Caco-2 (cell line): ENCODE measurements at regions of chr12 and their contacts with region 1.

Region 1: DNA sequence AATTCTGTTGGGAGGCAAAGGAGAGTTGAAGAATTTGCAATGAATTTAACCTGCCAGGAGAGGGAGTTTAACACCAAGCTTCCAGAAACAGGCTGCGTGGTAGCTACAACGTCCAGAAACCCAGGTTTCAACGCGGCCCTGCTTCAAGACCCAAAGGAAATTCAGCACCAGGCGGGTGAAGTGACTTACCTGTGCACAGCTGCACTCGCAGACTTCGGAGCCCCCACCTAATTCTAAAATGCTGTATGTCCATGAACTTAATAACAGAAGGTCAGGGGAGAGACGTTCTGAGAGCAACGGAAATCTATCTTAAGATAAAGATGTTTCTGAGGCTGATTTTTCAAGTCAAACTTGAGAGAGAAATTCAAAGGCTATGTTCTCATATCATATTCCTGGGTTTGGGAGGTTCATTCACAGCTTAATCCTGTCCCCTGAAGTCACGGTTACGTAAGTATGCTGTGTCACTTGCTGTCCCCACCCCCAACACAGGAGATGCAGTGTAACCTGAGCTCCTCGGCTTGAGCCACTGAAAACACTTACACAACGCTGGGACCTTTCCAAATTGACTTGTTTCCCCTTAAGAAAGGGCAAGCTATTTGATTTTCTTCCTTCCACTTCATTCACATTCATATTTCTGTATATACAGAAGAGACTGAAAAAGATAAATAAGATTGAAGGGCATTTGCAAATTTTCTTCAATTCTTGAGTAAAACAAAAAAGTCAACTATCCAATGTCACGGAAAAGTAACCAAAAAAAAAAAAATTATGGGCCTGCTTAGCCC is 22.7 kb downstream of the CLIP1 start:
- DNase-seq: peak; percentile 81 to 89
- H3K4me3 ChIP-seq: 0 out of 2 replicates have a peak overlapping the region, but pooled peaks have one; percentile 12
- H3K4me3 Mint-ChIP-seq: peak overlapping the region; percentile 75
- H3K27ac Mint-ChIP-seq: peak overlapping the region; percentile 99
- H3K4me1 ChIP-seq: peaks cover 35% of the 10 kb centered on the region
- H3K4me1 Mint-ChIP-seq: peaks cover 26% of the 10 kb centered on the region
- H3K27me3 ChIP-seq: no peaks in the 10 kb centered on the region
- H3K27me3 Mint-ChIP-seq: no peaks in the 10 kb centered on the region
- CTCF ChIP-seq: peak; percentile 62 to 77

Region 2: GRCh38 chr12:122366685-122367475 is 32.9 kb before region 1 on chr12:
- CTCF ChIA-PET with region 1: interaction called, 7 read pairs
- POLR2A ChIA-PET with region 1: interaction called, 5 read pairs
- intact Hi-C with region 1: loop called (anchors 2 kb)
- DNase-seq: peak; percentile 64 to 68
- H3K4me3 ChIP-seq: no peak overlapping the region
- H3K4me3 Mint-ChIP-seq: peak overlapping the region; percentile 37
- H3K27ac Mint-ChIP-seq: peak overlapping the region; percentile 98
- H3K4me1 ChIP-seq: peaks cover 30% of the 10 kb centered on the region
- H3K4me1 Mint-ChIP-seq: peaks cover 16% of the 10 kb centered on the region
- H3K27me3 ChIP-seq: no peaks in the 10 kb centered on the region
- H3K27me3 Mint-ChIP-seq: no peaks in the 10 kb centered on the region
- CTCF ChIP-seq: no peak

Region 3: DNA sequence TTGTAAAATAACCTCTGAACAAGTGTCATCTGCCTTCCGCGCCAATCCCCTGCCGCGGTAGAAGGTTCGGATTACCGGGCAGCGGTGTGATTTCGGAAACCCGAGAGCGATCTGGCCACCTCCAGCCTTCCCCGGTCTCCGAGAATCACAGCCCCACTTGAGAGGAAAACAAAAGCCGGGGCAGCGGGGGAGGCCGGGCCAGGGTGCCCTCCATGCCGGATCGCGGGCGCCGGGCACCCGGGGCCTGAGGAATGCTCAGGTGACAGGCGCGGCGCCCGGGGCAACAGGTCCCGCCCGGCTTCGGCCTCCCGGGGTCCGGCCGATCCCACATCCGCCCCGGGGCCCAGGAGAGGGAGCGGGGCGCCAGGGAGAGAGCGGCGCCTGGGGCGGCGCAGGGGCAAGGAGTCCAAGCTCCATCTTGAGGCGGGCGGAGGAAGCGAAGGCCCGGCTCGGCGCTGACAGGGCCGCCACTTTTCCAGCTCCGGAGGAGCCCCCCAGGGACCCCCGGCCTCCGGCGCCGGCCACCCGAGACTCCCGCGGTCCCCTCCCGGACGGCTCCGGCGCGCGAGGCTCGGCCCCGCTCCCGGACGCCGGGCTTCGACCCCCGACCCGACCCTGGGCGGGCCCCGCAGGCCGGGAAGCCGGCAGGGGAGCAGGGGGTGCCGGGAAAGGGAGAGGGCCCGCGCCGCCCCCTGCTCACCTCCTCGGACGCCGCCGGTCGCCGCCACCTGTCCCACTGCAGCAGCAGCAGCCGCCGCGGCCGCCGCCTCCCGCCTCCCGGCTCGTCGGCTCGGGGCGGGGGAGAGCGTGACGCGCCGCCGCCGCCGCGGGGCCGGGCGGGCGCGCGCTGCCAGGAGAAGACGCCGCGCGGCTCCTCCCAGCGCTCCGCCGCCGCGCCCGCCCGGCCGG is 22.3 kb after region 1 on chr12 and contains the start of gene CLIP1:
- CTCF ChIA-PET with region 1: interaction called, 20 read pairs
- POLR2A ChIA-PET with region 1: interaction called, 52 read pairs
- intact Hi-C with region 1: loop called (anchors 1 kb)
- DNase-seq: peak; percentile 81 to 86
- H3K4me3 ChIP-seq: peak within 1 kb of the TSS; percentile 66
- H3K4me3 Mint-ChIP-seq: peak within 1 kb of the TSS; percentile 89
- H3K27ac Mint-ChIP-seq: peak within 1 kb of the TSS; percentile 91
- H3K4me1 ChIP-seq: peaks cover 41% of the 10 kb centered on the region
- H3K4me1 Mint-ChIP-seq: peaks cover 14% of the 10 kb centered on the region
- H3K27me3 ChIP-seq: no peaks in the 10 kb centered on the region
- H3K27me3 Mint-ChIP-seq: no peaks in the 10 kb centered on the region
- CTCF ChIP-seq: peak; percentile 35 to 55
- total RNA-seq, gene CLIP1: 80.9 and 85.0 TPM in 2 replicates

Region 4: GRCh38 chr12:122449353-122449752 is 49.6 kb after region 1 on chr12:
- CTCF ChIA-PET with region 1: interaction called, 14 read pairs
- POLR2A ChIA-PET with region 1: interaction called, 4 read pairs
- intact Hi-C with region 1: loop called (anchors 1 kb)
- DNase-seq: peak; percentile 62 to 80
- H3K4me3 ChIP-seq: no peak overlapping the region
- H3K4me3 Mint-ChIP-seq: no peak overlapping the region
- H3K27ac Mint-ChIP-seq: peak overlapping the region; percentile 43
- H3K4me1 ChIP-seq: peaks cover 31% of the 10 kb centered on the region
- H3K4me1 Mint-ChIP-seq: peaks cover 12% of the 10 kb centered on the region
- H3K27me3 ChIP-seq: no peaks in the 10 kb centered on the region
- H3K27me3 Mint-ChIP-seq: no peaks in the 10 kb centered on the region
- CTCF ChIP-seq: no peak

Region 5: GRCh38 chr12:122471324-122472226 is 71.8 kb after region 1 on chr12:
- CTCF ChIA-PET with region 1: interaction called, 71 read pairs
- POLR2A ChIA-PET with region 1: interaction called, 22 read pairs
- intact Hi-C with region 1: loop called (anchors 1 kb)
- DNase-seq: peak in 1 of 2 experiments; percentile 64
- H3K4me3 ChIP-seq: no peak overlapping the region
- H3K4me3 Mint-ChIP-seq: no peak overlapping the region
- H3K27ac Mint-ChIP-seq: no peak overlapping the region
- H3K4me1 ChIP-seq: peaks cover 19% of the 10 kb centered on the region
- H3K4me1 Mint-ChIP-seq: no peaks in the 10 kb centered on the region
- H3K27me3 ChIP-seq: no peaks in the 10 kb centered on the region
- H3K27me3 Mint-ChIP-seq: no peaks in the 10 kb centered on the region
- CTCF ChIP-seq: peak; percentile 76 to 83

Region 6: DNA sequence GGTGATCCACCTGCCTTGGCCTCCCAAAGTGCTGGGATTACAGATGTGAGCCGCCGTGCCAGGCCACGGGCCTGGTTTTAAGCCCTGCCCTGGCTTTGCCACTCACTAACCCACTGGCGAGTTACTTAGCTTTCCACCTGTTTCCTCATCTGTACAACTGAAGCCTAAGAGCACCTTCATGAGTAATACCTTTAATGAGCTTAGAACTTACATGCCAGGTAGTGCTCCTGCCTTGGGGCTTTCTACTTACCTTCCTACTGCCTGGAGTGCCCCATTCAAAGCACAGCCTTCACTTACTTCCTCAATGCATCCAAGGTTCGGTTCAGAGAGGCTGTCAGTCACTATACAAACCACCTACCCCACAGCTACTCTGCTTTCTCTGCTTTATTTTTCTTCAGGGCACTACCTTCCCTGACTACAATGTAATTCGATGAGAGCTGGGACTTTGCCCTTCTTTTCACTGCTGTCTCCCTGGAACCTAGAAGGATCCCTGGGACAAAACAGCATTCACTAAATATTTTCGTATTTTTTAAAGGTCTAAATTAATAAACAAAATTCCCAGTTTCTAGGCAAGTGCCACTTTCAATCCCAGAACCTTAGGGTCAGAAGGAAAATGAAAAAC is 87.1 kb after region 1 on chr12:
- CTCF ChIA-PET with region 1: no interaction called
- POLR2A ChIA-PET with region 1: interaction called, 3 read pairs
- intact Hi-C with region 1: loop called (anchors 5 kb)
- DNase-seq: no peak
- H3K4me3 ChIP-seq: no peak overlapping the region
- H3K4me3 Mint-ChIP-seq: no peak overlapping the region
- H3K27ac Mint-ChIP-seq: no peak overlapping the region
- H3K4me1 ChIP-seq: peaks cover 19% of the 10 kb centered on the region
- H3K4me1 Mint-ChIP-seq: peaks cover 18% of the 10 kb centered on the region
- H3K27me3 ChIP-seq: no peaks in the 10 kb centered on the region
- H3K27me3 Mint-ChIP-seq: no peaks in the 10 kb centered on the region
- CTCF ChIP-seq: no peak

Region 7: GRCh38 chr12:122500685-122501488 is 101.1 kb after region 1 on chr12 and contains the start of gene ZCCHC8:
- CTCF ChIA-PET with region 1: interaction called, 27 read pairs
- POLR2A ChIA-PET with region 1: interaction called, 30 read pairs
- intact Hi-C with region 1: no loop called
- DNase-seq: peak; percentile 98
- H3K4me3 ChIP-seq: peak within 1 kb of the TSS; percentile 74
- H3K4me3 Mint-ChIP-seq: peak within 1 kb of the TSS; percentile 95
- H3K27ac Mint-ChIP-seq: peak within 1 kb of the TSS; percentile 99
- H3K4me1 ChIP-seq: 0 out of 2 replicates have a peak, but pooled peaks cover 8% of the 10 kb centered on the region
- H3K4me1 Mint-ChIP-seq: peaks cover 6% of the 10 kb centered on the region
- H3K27me3 ChIP-seq: no peaks in the 10 kb centered on the region
- H3K27me3 Mint-ChIP-seq: no peaks in the 10 kb centered on the region
- CTCF ChIP-seq: peak in 1 of 2 experiments; percentile 18
- total RNA-seq, gene ZCCHC8: 37.5 and 40.1 TPM in 2 replicates